ENCODE measurements at regions of chr19 and their contacts with region 1.

Region 1: DNA sequence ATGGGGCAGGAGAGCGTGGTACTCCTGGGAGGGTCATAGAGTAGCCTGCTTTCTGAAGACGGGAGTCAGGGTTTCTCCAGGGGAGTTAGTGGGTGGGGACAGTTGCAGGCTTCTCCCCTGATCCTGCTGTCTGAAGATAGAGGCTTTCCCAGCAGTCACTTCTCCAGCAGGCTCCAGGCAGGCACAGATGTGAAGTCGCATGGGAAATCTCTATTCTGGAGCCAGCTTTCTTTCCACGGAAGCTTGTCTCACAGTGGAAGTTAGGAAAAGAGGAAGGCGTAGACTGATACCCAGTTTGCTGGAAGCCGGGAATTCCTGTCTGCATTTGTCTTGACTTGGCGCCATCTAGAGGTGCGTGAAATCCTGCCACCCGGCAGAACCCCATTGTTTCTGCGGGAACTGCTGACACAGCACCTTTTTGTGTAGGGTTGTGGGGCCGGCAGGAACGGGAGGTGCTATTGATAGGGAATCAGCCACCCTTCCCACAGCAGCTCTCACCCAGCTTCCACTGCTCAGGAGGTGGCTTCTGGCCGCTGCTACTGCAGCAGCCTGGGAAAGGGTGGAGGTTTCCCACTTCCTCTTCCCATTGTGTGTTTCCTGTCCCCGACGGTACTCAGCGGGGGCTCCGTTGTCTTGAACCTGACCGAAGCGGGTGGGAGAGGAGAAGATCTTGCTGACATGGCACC is 28.5 kb upstream of the NPAS1 start:
- DNase-seq: peak; percentile 78 to 91
- H3K4me3 ChIP-seq: no peak overlapping the region
- H3K27ac ChIP-seq: no peak overlapping the region
- H3K4me1 ChIP-seq: peaks cover 0 to 4% (median under 1%) of the 10 kb centered on the region in 4 experiments; a peak in 2 of 7 replicates
- H3K27me3 ChIP-seq: no peaks in the 10 kb centered on the region
- CTCF ChIP-seq: peak; percentile 77 to 96 (median 90)
- EP300 ChIP-seq: 0 out of 3 replicates have a peak, but pooled peaks of 1 of the 2 experiments have one; percentile 39
- POLR2A ChIP-seq: no peak
- RAD21 ChIP-seq: peak; percentile 91 to 92

Region 2: GRCh38 chr19:46860125-46860845 is 130.8 kb before region 1 on chr19:
- CTCF ChIA-PET with region 1: interaction called, 17 read pairs
- POLR2A ChIA-PET with region 1: interaction called, 11 read pairs
- DNase-seq: peak; percentile 95
- H3K4me3 ChIP-seq: peak overlapping the region; percentile 74 to 88 (median 84)
- H3K27ac ChIP-seq: peak overlapping the region; percentile 95
- H3K4me1 ChIP-seq: peaks cover 4 to 16% (median 8%) of the 10 kb centered on the region in 4 experiments
- H3K27me3 ChIP-seq: peaks cover 0 to 1% (median under 1%) of the 10 kb centered on the region in 4 experiments; a peak in 1 of 7 replicates
- CTCF ChIP-seq: no peak
- EP300 ChIP-seq: no peak
- POLR2A ChIP-seq: peak; percentile 74 to 81
- RAD21 ChIP-seq: no peak

Region 3: DNA sequence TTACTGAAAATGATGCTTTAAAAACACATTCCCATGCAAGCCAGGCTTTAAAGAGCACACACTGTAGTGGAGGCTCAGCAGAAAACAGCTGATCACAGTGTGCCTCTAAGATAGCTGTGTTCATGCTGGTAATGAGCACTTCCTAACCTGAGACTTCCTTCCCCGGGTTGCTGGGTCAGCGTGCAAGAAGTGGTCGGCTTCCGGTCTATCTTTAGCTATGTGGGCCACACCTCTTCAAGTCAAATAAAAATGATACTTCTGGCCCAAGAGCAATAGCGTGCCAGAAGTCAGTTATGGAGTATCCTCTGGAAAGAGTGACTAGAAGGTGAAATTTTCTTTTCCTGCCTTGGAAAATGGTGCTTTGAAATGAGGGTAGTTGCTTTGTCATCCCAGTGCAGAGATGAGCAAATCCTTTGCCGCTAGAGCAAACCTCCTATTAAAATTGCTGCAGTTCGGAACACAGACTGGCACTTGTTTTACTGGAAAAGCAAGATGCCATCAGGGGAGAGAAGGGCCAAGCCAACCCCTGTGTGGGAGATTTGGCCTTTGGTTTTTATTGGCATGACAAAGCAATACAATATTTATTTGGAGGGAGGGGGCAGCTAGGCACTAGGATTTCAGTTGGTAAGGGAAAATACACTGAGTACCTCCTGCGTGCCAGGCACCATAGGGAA is 66.1 kb before region 1 on chr19:
- CTCF ChIA-PET with region 1: interaction called, 47 read pairs
- POLR2A ChIA-PET with region 1: no interaction called
- DNase-seq: no peak
- H3K4me3 ChIP-seq: no peak overlapping the region
- H3K27ac ChIP-seq: 0 out of 2 replicates have a peak overlapping the region, but pooled peaks have one; percentile 19
- H3K4me1 ChIP-seq: peaks cover 0 to 13% (median 5%) of the 10 kb centered on the region in 4 experiments; a peak in 3 of 7 replicates
- H3K27me3 ChIP-seq: no peaks in the 10 kb centered on the region; a peak in 1 of 7 replicates
- CTCF ChIP-seq: no peak
- EP300 ChIP-seq: no peak
- POLR2A ChIP-seq: no peak
- RAD21 ChIP-seq: no peak

Region 4: GRCh38 chr19:46944918-46945628 is 46.1 kb before region 1 on chr19:
- CTCF ChIA-PET with region 1: interaction called, 24 read pairs
- POLR2A ChIA-PET with region 1: no interaction called
- DNase-seq: peak in 1 of 2 experiments; percentile 52
- H3K4me3 ChIP-seq: no peak overlapping the region
- H3K27ac ChIP-seq: no peak overlapping the region
- H3K4me1 ChIP-seq: peaks cover 1 to 10% (median 6%) of the 10 kb centered on the region in 4 experiments; a peak in 4 of 7 replicates
- H3K27me3 ChIP-seq: no peaks in the 10 kb centered on the region
- CTCF ChIP-seq: no peak
- EP300 ChIP-seq: no peak
- POLR2A ChIP-seq: no peak
- RAD21 ChIP-seq: no peak

Region 5: GRCh38 chr19:46967578-46968027 is 23.5 kb before region 1 on chr19:
- CTCF ChIA-PET with region 1: interaction called, 16 read pairs
- POLR2A ChIA-PET with region 1: no interaction called
- DNase-seq: no peak
- H3K4me3 ChIP-seq: no peak overlapping the region
- H3K27ac ChIP-seq: no peak overlapping the region
- H3K4me1 ChIP-seq: no peaks in the 10 kb centered on the region
- H3K27me3 ChIP-seq: no peaks in the 10 kb centered on the region
- CTCF ChIP-seq: no peak
- EP300 ChIP-seq: no peak
- POLR2A ChIP-seq: no peak
- RAD21 ChIP-seq: no peak

Region 6: DNA sequence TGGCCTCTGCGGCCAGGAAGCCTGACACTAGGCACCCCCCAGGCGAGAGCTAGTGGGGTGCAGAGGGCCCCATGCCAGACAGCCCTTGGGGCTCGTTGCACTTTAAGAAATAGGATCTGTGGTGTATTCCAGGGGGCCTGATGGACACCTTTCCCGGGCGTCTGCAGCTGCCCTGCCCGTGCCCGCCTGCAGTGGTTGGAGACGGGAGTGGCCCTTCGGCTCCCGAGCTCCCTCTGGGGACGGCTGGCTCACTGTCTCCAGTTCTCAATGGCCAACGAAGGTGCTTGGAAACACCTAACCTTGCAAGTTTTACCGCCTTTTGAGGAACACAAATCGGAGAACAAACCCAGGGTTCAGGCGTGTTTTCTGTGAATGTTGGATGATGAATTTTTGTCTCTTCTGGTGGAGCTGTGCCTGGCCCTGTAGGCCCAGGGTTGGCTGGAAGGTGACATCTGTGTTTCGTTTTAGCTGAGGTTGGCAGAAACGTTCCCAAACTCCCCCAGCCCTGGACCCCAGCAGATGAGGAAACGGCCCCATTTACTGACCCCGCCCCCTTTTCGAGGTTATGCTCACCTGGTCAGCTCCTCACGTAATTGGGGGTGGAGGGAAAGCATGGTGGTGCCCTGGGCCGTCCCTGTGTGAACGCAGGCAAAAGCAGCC is 11.1 kb after region 1 on chr19:
- CTCF ChIA-PET with region 1: interaction called, 22 read pairs
- POLR2A ChIA-PET with region 1: interaction called, 5 read pairs
- DNase-seq: no peak
- H3K4me3 ChIP-seq: no peak overlapping the region
- H3K27ac ChIP-seq: no peak overlapping the region
- H3K4me1 ChIP-seq: peaks cover 0 to 5% (median 0%) of the 10 kb centered on the region in 4 experiments; a peak in 2 of 7 replicates
- H3K27me3 ChIP-seq: no peaks in the 10 kb centered on the region
- CTCF ChIP-seq: peak in 2 of 3 experiments; percentile 24 to 35; a peak in 3 of 4 replicates
- EP300 ChIP-seq: no peak
- POLR2A ChIP-seq: no peak
- RAD21 ChIP-seq: peak in 1 of 2 experiments; percentile 26; a peak in 2 of 4 replicates

Region 7: DNA sequence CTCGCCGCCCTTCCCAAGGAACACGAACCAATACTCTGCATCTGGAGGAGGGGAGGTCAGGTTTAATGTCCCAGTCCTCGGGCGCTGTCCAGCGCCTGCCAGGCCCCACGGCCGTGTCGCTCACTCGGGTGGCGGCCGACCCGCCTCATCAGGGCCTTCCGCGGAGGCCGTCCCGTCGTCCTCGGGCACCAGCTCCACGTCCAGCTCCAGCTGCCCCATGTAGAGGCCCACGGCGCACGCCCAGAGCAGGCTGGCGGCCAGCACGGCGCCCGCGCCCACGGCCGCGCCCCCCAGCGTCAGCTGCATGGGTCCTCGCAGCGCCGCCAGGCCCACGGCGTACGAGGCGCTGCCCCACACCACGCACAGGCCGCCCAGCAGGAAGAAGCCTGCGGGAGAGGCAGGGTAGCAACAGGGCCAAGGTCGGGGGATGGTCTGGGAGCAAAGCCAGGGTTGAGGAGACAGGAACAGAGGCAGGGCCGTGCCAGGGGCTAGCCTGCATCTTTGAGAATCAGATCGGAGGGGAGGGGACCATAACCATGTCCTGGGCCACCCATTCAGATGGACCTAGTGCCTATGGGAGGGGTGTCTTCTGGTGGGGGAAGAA is 54.8 kb after region 1 on chr19:
- CTCF ChIA-PET with region 1: no interaction called
- POLR2A ChIA-PET with region 1: no interaction called
- DNase-seq: no peak
- H3K4me3 ChIP-seq: no peak overlapping the region
- H3K27ac ChIP-seq: no peak overlapping the region
- H3K4me1 ChIP-seq: peaks cover 0 to 5% (median 4%) of the 10 kb centered on the region in 4 experiments; a peak in 3 of 7 replicates
- H3K27me3 ChIP-seq: no peaks in the 10 kb centered on the region
- CTCF ChIP-seq: no peak
- EP300 ChIP-seq: no peak
- POLR2A ChIP-seq: no peak
- RAD21 ChIP-seq: no peak